ENCODE measurements at regions of chr5 and their contacts with region 1.

Region 1: GRCh38 chr5:76544268-76544926 is 78.8 kb downstream of the F2RL2 start:
- DNase-seq: peak; percentile 43
- CTCF ChIP-seq: peak; percentile 78

Region 2: GRCh38 chr5:76415855-76416254 is 128.5 kb before region 1 on chr5:
- CTCF ChIA-PET with region 1: no interaction called
- POLR2A ChIA-PET with region 1: no interaction called
- DNase-seq: no peak
- CTCF ChIP-seq: no peak

Region 3: GRCh38 chr5:76527685-76528161 is 16.7 kb before region 1 on chr5:
- CTCF ChIA-PET with region 1: interaction called, 26 read pairs
- POLR2A ChIA-PET with region 1: no interaction called
- DNase-seq: no peak
- CTCF ChIP-seq: no peak

Region 4: DNA sequence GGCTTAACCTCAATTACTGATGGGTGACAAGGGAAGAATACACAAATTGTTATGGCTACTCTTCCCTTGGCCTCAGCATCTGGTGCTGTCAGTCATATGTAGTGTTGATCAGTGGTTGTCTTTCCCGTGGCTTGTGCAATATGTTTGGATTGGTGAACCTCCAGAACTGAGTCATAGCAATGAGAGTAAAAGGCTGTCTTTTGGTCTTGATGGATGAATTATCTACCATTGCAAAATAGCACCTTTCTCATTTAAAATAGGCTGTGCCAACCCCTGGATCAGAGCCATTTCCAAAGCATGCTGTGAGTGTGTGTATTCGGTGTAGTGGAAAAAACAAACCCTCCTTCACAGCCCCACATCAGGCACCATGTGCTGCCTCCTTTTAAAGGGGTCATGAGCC is 156.9 kb after region 1 on chr5:
- CTCF ChIA-PET with region 1: no interaction called
- POLR2A ChIA-PET with region 1: no interaction called
- DNase-seq: no peak
- CTCF ChIP-seq: no peak

Measured in GM10248 (cell line).